Stomach (tissue), 19 donors: ENCODE measurements at regions of chr5 and their contacts with region 1.

Region 1: GRCh38 chr5:147935032-147935431 is 28.7 kb upstream of the C5orf46 start:
- DNase-seq: peak in 1 of 2 donors; percentile 74
- H3K4me3 ChIP-seq: no peak overlapping the region
- H3K27ac ChIP-seq: no peak overlapping the region
- H3K4me1 ChIP-seq: no peaks in the 10 kb centered on the region
- H3K27me3 ChIP-seq: no peaks in the 10 kb centered on the region
- CTCF ChIP-seq: peak in 3 of 7 experiments; percentile 43 to 75 (median 50)
- EP300 ChIP-seq: no peak
- POLR2A ChIP-seq: no peak

Region 2: DNA sequence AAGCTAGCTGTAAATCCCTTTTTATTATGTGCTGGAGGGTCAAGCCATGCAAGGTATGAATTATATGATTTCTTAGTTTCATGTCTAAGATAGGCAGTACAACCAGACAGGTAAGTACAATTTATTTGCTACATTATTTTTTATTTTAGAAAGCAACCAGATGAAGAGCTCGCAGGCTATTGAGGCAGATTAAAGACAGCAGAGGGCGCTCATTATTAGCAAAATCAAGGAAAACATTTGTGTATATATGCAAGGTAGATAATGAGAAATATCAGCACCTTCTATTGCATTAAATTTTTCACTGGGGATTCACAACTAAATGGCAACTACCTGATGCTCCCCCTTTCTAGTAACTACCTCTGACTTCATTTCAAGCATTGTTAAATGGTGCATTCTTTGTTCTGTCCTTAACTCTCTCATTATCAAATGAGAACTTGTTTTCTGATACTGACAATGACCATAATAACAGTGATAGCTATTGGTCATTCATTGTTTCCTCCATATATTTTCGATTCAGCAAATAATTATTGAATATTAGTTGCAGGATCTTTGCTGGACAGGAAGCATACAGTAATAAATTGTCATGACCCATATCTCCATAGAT is 47.9 kb before region 1 on chr5:
- intact Hi-C with region 1: loop called (anchors 10 kb)
- DNase-seq: peak in 1 of 2 donors; percentile 70
- H3K4me3 ChIP-seq: no peak overlapping the region
- H3K27ac ChIP-seq: no peak overlapping the region
- H3K4me1 ChIP-seq: peaks cover 0 to 7% (median 0%) of the 10 kb centered on the region in 4 donors
- H3K27me3 ChIP-seq: no peaks in the 10 kb centered on the region
- CTCF ChIP-seq: peak in 5 of 7 experiments; percentile 24 to 65 (median 38)
- EP300 ChIP-seq: no peak
- POLR2A ChIP-seq: no peak